Cardiac septum (tissue), 1 donor: ENCODE measurements at regions of chr9 and their contacts with region 1.

Region 1: GRCh38 chr9:129139993-129140396 is 28.8 kb downstream of the PTPA start:
- DNase-seq: peak; percentile 93

Region 2: DNA sequence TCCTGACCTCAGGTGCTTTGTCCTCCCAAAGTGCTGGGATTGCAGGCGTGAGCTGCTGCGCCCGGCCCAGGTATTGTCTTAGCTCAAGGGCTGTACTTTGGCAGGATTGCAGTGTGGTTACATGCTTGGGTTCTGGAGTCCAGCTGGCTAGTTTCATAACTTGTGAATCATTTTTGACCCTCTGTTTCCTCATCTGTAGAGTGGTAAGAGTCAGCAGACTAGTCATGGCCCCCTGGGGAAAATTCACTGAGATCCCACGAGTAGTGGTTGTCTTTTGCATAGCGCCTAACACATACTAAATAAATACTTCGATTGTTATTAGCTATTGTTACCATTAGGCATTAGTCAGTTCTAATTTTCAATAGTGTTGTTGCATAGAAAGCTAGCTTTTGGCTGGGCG is 14.5 kb before region 1 on chr9:
- intact Hi-C with region 1: no loop called
- DNase-seq: no peak

Region 3: DNA sequence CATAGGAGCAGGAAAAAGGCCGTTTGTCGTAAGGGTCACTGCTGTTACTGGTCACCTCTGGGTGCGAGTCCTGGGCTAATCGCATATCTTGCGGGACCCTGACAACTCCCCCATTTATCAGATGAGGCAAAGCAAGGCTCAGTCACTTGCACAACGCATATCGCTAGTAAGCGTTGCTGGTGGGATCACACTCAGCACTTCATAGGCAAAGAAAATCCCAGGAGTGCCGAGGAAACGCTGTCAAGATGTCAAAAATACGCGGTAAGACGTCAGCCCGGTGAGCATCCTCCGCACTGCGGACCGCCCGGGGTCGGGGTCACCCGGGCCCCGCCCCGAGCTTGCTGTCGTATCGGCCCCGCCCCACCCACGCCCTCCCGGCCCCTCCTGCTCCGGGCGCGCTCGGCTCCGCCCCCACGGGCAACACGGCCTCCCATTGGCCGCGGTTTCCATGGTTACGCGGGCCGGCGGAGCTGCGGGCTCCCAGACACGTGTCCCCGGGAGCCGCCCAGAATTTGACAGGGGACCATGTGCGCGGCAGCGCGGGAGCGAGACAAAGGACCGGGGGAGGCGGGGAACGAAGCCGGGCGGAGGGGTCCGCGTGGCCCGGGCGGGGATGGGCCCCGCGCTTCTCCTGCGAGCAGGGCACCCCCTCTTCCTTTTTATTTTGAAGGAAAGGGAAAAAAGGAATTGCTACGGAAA is 118.3 kb after region 1 on chr9:
- intact Hi-C with region 1: loop called (anchors 2 kb)
- DNase-seq: peak; percentile 94

Region 4: DNA sequence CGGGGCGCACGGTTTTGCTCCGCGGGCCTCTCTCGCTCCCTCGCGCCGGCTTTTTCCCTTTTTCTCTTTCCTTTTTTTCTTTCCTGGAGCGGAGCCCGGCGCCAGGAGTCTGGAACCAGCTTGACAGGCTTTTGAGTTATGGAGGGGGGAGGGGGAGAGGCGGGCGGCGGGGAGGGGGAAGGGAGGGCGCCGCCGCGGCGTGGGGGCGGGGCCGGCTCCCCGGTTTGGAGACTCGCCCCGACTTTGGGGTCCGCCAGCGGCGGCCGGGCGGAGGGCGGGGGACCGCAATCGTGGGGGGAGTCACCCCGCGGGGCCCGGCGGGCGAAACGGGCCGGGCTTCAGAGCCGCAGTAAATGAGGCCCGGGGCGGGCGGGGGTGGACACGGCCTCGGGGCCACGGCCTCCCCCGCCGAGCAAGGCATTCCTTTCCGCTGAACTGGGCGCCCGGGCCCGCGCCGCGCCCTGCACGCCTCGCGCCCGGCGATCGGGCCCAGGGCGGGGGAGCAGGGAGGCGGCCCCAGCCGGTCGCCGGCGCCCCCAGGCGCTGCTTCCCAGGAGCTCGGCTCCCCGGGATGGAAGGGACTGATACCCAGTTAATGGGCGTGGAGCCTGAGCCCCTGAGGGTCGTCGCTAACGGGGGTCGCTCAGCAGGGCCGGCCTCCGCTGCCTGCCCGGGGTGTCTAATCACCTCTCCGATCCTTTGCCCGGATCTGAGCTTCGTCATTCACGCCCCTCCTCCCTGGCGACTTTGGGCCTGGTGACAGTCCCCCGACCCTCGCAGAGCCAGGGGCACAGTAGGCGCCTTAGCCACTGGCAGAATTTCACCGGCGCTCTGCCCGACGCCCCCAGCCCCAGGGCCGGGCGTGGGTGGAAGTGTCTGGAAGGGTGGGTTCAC is 342.8 kb after region 1 on chr9:
- intact Hi-C with region 1: loop called (anchors 1 kb)
- DNase-seq: peak; percentile 89

Region 5: GRCh38 chr9:129495534-129496325 is 355.7 kb after region 1 on chr9:
- intact Hi-C with region 1: loop called (anchors 1 kb)
- DNase-seq: peak; percentile 97